Mammary epithelial cell (primary cell): ENCODE measurements at regions of chr12 and their contacts with region 1.

Region 1: DNA sequence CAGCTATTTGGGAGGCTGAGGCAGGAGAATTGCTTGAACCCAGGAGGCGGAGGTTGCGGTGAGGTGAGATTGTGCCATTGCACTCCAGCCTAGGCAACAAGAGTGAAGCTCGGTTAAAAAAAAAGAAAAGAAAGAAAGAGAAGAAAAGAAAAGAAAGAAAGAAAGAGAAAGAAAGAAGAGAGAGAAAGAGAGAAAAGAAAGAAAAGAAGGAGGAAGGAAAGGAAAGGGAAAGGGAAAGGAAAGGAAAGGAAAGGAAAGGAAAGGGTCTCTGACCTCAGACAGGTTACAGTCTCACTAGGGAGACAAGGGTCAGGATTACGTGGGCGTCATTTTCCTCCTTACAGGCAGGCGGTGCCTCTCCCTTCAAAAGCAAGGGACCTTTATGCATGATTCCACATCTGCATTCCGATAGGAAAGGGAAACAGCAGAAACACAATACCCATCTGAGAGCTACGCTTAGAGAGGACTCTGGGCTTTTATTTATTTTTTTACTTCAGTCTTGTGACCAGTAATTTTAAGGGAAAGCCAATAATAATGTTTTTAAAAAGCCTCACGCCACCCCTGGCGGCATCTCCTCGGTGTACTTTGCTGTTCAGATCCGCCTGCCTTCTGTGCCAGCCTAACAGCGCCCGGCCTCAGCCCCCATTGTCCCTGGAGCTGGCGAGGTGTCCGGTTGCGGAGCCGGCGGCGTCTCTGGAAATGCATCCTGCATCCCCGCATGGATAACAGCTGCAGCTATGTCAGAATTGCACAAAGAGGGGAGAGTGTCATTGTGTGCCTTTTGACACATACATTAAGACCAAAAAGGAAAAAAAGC is 945 bp upstream of the HIP1R start:
- DNase-seq: peak; percentile 45
- H3K4me3 ChIP-seq: peak overlapping the region; percentile 23 to 72 (median 46)
- H3K27ac ChIP-seq: peak overlapping the region; percentile 41
- H3K4me1 ChIP-seq: peaks cover 30% of the 10 kb centered on the region
- H3K27me3 ChIP-seq: no peaks in the 10 kb centered on the region
- CTCF ChIP-seq: peak in 1 of 2 donors; percentile 10

Region 2: GRCh38 chr12:122807651-122808050 is 26.7 kb before region 1 on chr12:
- CTCF ChIA-PET with region 1: no interaction called
- dilution Hi-C with region 1: no loop called
- in situ Hi-C with region 1: no loop called
- intact Hi-C with region 1: loop called (anchors 2 kb)
- DNase-seq: no peak
- H3K4me3 ChIP-seq: no peak overlapping the region
- H3K27ac ChIP-seq: no peak overlapping the region
- H3K4me1 ChIP-seq: peaks cover 6% of the 10 kb centered on the region
- H3K27me3 ChIP-seq: no peaks in the 10 kb centered on the region
- CTCF ChIP-seq: no peak

Region 3: DNA sequence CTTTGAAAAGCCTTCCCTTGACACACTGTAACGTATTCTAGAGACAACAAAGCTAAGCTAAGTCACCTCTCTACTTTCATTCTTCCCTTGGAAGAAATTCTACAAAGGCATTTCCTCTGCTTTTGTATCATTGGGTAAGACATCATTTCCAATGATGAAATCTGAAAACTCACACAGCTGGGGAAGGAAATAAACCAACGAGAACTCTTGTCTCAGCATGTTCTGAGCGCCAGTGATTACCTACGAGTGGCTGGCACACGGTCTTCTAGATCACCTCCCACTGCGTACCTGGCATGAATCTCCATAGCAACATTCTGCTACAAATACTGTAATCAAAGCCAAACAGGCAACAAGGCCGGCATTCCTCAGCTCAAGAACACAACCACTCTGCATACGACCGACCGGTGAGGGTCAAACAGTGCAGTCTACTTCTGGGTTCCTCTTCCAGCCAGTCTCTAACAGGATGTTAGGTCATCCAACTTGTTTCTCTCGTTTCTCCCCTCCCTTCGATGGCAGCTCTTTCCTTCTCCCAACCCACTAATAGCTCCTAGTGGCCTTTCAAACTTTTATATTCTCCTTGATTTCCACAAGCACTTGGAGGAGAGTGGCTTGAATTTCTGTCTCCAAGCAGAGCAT is 54.0 kb after region 1 on chr12:
- CTCF ChIA-PET with region 1: no interaction called
- dilution Hi-C with region 1: no loop called
- in situ Hi-C with region 1: no loop called
- intact Hi-C with region 1: loop called (anchors 1 kb)
- DNase-seq: peak; percentile 100
- H3K4me3 ChIP-seq: peak overlapping the region; percentile 33 to 40 (median 37)
- H3K27ac ChIP-seq: peak overlapping the region; percentile 99
- H3K4me1 ChIP-seq: peaks cover 83% of the 10 kb centered on the region
- H3K27me3 ChIP-seq: no peaks in the 10 kb centered on the region
- CTCF ChIP-seq: no peak

Region 4: DNA sequence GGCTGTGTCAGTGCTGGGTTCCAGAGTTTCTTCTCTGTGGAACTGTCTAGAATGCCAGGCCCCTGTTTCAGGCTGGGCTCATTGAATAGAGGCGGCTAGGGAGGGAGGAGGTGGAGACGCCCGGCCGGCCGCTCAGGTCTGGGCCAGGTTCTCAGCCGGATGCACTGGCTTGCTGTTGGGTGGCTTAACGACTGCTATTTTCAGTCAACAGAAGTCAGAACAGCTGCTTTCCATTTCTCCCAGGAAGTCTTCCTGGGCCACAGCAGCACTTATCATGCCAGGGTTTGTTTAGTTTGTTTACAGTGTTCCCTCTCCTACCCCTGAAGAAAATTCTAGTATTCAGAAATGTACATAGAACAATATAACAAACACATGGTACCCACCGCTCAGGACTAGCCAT is 87.6 kb after region 1 on chr12:
- CTCF ChIA-PET with region 1: no interaction called
- dilution Hi-C with region 1: no loop called
- in situ Hi-C with region 1: no loop called
- intact Hi-C with region 1: no loop called
- DNase-seq: no peak
- H3K4me3 ChIP-seq: no peak overlapping the region
- H3K27ac ChIP-seq: no peak overlapping the region
- H3K4me1 ChIP-seq: peaks cover 19% of the 10 kb centered on the region
- H3K27me3 ChIP-seq: no peaks in the 10 kb centered on the region
- CTCF ChIP-seq: no peak

Region 5: GRCh38 chr12:122932207-122932606 is 97.9 kb after region 1 on chr12:
- CTCF ChIA-PET with region 1: no interaction called
- dilution Hi-C with region 1: no loop called
- in situ Hi-C with region 1: no loop called
- intact Hi-C with region 1: no loop called
- DNase-seq: no peak
- H3K4me3 ChIP-seq: no peak overlapping the region
- H3K27ac ChIP-seq: no peak overlapping the region
- H3K4me1 ChIP-seq: no peaks in the 10 kb centered on the region
- H3K27me3 ChIP-seq: no peaks in the 10 kb centered on the region
- CTCF ChIP-seq: no peak